IMR-90 (cell line): ENCODE measurements at regions of chr3 and their contacts with region 1.

Region 1: GRCh38 chr3:79922633-79923032 is 154.8 kb upstream of the ROBO1 start:
- DNase-seq: no peak
- ATAC-seq: no peak
- H3K4me3 ChIP-seq: no peak overlapping the region
- H3K27ac ChIP-seq: no peak overlapping the region
- H3K4me1 ChIP-seq: no peaks in the 10 kb centered on the region
- H3K27me3 ChIP-seq: no peaks in the 10 kb centered on the region
- CTCF ChIP-seq: no peak
- POLR2A ChIP-seq: no peak
- RAD21 ChIP-seq: no peak

Region 2: DNA sequence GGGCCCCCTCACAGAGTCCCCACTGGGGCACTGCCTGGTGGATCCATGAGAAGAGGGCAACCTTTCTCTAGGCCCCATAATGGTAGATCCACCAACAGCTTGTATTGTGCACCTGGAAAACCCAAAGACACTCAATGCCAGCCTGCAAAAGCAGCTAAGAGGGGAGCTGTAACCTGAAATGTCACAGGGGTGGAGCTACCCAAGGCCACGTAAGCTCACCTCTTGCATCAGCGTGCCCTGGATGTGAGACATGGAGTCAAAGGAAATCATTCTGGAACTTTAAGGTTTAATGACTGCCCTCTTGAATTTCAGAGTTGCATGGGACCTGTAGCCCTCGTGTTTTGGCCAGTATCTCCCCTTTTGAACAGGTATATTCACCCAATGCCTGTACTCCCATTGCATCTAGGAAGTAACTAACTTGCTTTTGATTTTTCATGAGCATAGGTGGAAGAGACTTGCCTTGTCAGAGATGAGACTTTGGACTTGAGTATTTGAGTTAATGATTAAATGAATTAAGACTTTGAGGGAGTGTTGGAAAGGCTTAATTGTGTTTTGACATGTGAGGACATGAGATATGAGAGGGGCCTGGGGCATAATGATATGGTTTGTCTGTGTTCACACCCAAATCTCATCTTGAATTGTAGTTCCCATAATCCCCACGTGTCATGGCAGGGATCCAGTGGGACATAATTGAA is 746.1 kb after region 1 on chr3:
- CTCF ChIA-PET with region 1: no interaction called
- POLR2A ChIA-PET with region 1: interaction called, 12 read pairs
- dilution Hi-C with region 1: no loop called
- in situ Hi-C with region 1: no loop called
- intact Hi-C with region 1: no loop called
- DNase-seq: no peak
- ATAC-seq: no peak
- H3K4me3 ChIP-seq: no peak overlapping the region
- H3K27ac ChIP-seq: no peak overlapping the region
- H3K4me1 ChIP-seq: no peaks in the 10 kb centered on the region
- H3K27me3 ChIP-seq: no peaks in the 10 kb centered on the region
- CTCF ChIP-seq: no peak
- POLR2A ChIP-seq: no peak
- RAD21 ChIP-seq: no peak